ENCODE measurements at regions of chr17 and their contacts with region 1.

Region 1: DNA sequence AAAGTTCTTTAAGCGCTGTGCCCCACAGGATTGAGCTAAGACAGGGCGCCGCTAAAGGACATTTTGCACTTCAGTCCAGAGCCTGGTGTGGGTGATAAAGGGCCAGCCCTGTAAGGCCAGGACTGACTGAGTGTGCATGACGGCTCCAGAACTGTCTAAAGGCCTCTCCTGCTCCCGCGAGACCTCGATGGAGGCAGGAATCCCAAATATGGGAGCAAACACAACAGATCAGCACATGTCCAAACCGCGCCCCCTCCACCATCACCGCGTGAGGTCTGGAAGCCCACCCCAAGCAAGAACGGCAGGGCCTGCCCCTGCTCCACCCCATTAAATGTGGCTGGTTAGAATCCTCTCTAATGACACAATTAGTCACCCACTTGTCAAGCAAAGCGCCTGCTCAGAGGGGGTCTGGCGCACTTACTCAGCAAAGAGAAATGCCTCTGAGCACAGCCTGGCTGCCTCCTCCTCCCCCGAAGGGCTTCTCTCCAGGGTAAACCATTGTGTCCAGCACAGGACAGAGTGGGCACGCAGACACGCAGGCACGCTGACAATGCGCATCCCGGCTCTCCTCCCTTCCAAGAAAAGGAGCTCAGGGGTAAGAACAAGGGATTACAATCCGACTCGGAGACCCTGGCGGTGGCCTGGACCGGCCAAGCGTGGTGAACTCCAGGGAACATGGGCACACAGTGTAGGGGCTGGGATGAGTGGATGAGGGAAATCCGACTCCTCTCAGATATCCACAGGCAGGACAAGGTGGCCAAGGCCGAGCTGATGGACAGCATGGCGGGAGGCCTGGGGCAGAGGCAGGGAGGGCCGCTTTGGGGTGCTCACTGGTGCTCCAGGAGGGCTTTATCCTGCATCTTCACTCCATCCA is 1.5 kb downstream of the MXRA7 start:
- DNase-seq: peak; percentile 87 to 94 (median 91)
- ATAC-seq: peak; percentile 80 to 89 (median 88)
- H3K4me3 ChIP-seq: peak overlapping the region; percentile 35 to 98 (median 78)
- H3K27ac ChIP-seq: peak overlapping the region; percentile 80 to 99 (median 96)
- H3K4me1 ChIP-seq: peaks cover 4 to 77% (median 53%) of the 10 kb centered on the region in 12 donors
- H3K27me3 ChIP-seq: no peaks in the 10 kb centered on the region
- CTCF ChIP-seq: no peak
- POLR2A ChIP-seq: peak; percentile 35 to 79

Region 2: DNA sequence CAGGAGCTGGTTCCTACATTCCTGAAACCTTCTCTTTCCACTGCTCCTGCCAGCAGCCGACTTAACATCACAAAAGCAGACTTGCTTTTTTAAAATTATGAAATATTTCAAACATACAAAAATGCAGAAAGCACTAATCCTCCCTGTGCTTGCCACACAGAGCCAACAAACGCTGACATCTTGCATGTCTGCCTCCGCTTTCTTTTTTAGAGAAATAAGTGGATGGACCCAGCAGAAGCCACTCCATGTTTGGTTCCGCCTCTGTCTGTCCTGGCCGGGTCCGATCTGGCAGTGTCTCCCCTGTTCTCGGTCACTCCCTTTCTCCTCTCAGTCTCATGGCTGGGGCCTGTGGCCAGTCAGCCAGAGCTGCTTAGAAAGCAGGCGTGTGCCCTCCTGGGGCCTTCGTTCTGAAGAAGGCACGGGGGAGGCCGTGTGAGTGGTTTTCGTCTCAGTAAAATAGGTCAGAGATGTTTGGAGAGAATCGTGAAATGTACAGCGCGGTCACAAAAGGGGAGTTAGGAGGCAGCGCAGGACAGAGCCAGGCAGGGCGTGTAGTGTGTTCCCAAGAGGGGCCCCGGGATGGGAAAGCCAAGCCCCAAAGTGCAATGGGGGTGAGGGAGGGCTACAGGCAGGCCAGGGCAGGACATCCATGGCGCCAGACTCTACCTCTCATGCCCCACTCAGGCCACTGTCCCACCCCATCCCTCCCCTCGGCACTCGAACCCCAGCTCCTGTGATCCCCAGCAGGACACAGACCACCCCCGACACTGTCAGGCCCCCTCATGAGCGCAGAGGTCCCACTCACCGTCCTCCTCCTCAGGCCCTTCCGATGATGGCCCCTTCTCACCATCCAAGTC is 21.8 kb before region 1 on chr17:
- intact Hi-C with region 1: loop called in 3 of 10 experiments (anchors 2 kb)
- DNase-seq: peak; percentile 61 to 86 (median 78)
- ATAC-seq: peak; percentile 9 to 52 (median 43)
- H3K4me3 ChIP-seq: no peak overlapping the region
- H3K27ac ChIP-seq: peak overlapping the region; percentile 86 to 99 (median 93)
- H3K4me1 ChIP-seq: peaks cover 21 to 100% (median 90%) of the 10 kb centered on the region in 12 donors
- H3K27me3 ChIP-seq: no peaks in the 10 kb centered on the region
- CTCF ChIP-seq: no peak
- POLR2A ChIP-seq: no peak